Activated T-helper 2 cell treated with anti-CD3 and anti-CD28 coated beads, Interferon-gamma antibody, Interleukin-2, Interleukin-4, amounts not matched to agents 10 μg/mL and 5 μg/mL and 100 μg/mL, durations not matched to agents 14 hours and 24 hours and 36 hours (primary cell): ENCODE measurements at regions of chr10 and their contacts with region 1.

Region 1: DNA sequence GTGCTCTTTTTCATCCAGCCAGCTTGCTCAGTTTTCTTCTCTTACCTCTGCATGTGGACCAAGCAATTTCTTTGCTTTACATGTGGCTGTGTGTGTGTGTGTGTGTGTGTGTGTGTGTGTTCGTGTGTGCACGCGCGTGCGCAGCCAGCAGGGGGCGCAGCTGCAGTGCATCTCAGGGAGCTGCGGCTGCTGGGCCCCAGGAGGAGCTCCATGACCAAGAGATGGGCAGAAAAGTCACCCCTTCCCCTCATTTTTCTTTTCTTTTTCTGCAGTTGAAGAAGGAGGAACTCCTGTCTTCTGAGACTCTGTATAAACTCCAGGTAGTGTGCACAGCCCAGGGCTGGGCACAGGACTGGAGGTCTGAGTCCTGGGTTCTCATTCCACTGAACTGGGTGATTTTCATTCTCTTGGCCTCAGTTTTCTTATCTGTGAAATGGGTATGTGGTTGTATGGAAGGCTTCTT is 41.8 kb downstream of the BLNK start:
- DNase-seq: peak; percentile 51
- H3K4me3 Mint-ChIP-seq: no peak overlapping the region
- H3K27ac Mint-ChIP-seq: no peak overlapping the region
- H3K4me1 Mint-ChIP-seq: peaks cover 2% of the 10 kb centered on the region
- H3K27me3 Mint-ChIP-seq: no peaks in the 10 kb centered on the region

Region 2: DNA sequence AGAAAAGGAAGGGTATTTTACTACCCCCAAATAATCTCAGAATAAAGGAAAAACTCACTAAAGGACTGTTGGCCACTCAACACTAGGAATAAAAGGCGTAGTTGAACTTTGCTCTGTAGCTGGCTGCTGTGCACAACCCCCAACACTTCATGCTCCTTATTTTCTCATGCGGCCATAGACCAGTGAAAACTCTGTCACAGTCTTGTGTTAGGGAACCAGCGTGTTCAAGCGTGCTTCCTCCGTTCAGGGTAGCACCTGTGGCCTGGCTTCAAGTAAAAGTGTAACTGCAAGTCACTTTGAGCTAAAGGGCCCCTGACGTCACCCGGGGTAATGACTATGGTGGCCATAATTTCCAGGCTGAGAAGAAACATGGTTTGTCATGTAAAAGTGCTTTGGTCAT is 14.8 kb after region 1 on chr10:
- intact Hi-C with region 1: no loop called
- DNase-seq: no peak
- H3K4me3 Mint-ChIP-seq: no peak overlapping the region
- H3K27ac Mint-ChIP-seq: no peak overlapping the region
- H3K4me1 Mint-ChIP-seq: no peaks in the 10 kb centered on the region
- H3K27me3 Mint-ChIP-seq: peaks cover 7% of the 10 kb centered on the region

Region 3: GRCh38 chr10:96292971-96293920 is 63.6 kb after region 1 on chr10:
- intact Hi-C with region 1: loop called (anchors 1 kb)
- DNase-seq: no peak
- H3K4me3 Mint-ChIP-seq: no peak overlapping the region
- H3K27ac Mint-ChIP-seq: no peak overlapping the region
- H3K4me1 Mint-ChIP-seq: peaks cover 15% of the 10 kb centered on the region
- H3K27me3 Mint-ChIP-seq: peaks cover 4% of the 10 kb centered on the region

Region 4: DNA sequence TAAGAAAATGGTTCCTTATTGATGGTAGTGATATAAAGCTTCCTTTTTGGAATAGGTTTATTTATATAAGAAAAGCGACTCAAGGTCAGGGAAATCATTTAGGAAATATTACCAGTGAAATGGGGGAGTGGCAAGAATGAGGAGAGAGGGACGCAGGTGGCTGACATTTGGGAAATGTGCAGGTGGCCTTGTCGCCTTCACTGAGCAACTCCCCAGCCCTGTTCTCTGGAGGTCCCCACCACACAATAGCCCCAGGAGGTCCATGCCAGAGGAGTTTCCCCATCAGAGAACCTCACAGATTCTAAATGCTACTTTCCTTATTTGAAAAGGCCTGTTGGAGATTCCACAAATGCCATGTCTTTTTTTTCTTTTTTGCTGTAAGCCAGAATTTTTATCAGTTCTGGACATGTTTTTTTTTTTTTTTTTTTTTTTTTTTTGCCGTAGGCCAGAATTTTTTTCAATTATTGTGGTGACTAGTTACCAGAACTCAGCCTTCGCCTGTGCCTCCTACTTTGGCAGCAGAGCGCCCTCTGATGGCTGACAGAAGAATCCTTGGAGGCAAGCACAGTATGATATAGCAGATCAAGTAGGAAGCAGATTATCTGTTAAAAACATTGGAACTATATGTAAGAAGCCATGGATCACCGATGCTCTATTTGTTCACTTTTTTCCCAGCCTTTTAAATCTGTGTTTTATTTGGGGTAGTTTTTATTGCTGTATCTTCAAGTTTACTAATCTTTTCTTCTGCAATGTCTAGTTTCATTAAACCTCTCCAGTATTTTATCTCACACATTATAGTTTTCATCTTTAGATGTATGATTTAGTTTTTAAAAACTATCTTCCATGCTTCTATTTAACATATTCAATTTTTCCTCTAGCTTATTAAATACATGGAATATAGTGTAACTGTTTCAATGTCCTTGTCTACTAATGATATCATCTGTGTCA is 110.6 kb after region 1 on chr10:
- intact Hi-C with region 1: loop called (anchors 5 kb)
- DNase-seq: peak; percentile 26
- H3K4me3 Mint-ChIP-seq: no peak overlapping the region
- H3K27ac Mint-ChIP-seq: no peak overlapping the region
- H3K4me1 Mint-ChIP-seq: peaks cover 7% of the 10 kb centered on the region
- H3K27me3 Mint-ChIP-seq: peaks cover 28% of the 10 kb centered on the region